ENCODE measurements at regions of chr6 and their contacts with region 1.

Region 1: DNA sequence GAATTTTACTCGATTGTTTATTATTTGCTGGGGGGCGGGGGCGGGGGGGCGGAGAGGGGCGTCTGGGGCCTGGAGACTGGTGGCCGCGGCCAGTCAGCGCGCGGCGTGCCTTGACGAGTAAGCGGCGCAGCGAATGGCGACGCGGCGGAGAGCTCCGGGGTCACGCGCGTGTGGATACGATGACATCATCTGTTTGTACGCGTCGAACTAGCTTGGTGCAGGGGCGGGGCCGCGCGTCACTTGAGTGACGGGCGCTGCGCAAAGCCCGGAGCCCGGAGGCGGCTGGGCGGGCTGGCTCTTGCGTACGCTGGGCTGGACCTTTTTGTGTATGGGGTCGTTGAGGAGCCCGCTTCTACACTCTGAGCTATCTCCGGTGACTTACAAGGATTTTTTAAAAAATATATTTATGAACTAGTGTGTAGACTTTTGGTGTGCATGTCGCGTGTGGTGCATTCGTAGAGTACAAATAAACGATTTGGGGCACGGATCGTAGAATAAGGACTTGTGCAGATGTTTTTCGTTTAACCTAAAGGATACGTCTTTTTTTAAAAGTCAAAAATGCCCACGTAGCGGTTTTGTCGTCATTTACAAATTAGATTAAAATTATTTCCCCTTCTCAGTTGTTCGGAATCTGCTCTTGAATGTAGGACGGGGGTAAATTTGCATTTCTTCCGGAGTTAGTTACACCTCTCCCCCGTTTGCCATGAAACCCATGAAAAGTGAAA is 2.2 kb upstream of the FOXO3 start:
- DNase-seq: peak; percentile 98
- H3K4me3 ChIP-seq: peak overlapping the region; percentile 82 to 93 (median 85)
- H3K27ac ChIP-seq: peak overlapping the region; percentile 83
- H3K4me1 ChIP-seq: peaks cover 30% of the 10 kb centered on the region
- H3K27me3 ChIP-seq: no peaks in the 10 kb centered on the region
- CTCF ChIP-seq: no peak

Region 2: DNA sequence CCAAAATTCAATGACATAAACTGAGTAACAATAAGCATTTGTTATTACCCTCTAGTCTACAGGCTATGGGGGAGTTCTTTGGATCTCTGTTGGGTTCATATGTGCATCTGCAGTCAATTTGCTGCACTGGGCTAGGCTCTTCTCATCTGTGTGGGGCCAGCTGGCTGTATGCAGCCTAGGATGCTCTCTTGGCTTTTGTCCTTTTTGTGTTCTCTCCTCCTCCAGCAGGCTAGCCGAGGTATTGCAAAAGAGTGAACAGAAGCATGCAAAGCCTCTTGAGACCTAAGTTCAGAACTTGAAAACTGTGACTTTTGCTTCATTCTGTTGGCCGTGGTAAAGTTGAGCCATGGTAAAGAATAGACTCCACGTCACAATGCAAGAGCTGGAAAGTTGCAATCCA is 60.7 kb before region 1 on chr6:
- CTCF ChIA-PET with region 1: no interaction called
- dilution Hi-C with region 1: no loop called
- in situ Hi-C with region 1: no loop called
- intact Hi-C with region 1: no loop called
- DNase-seq: peak; percentile 29
- H3K4me3 ChIP-seq: no peak overlapping the region
- H3K27ac ChIP-seq: no peak overlapping the region
- H3K4me1 ChIP-seq: peaks cover 8% of the 10 kb centered on the region
- H3K27me3 ChIP-seq: no peaks in the 10 kb centered on the region
- CTCF ChIP-seq: peak; percentile 41 to 70

Region 3: DNA sequence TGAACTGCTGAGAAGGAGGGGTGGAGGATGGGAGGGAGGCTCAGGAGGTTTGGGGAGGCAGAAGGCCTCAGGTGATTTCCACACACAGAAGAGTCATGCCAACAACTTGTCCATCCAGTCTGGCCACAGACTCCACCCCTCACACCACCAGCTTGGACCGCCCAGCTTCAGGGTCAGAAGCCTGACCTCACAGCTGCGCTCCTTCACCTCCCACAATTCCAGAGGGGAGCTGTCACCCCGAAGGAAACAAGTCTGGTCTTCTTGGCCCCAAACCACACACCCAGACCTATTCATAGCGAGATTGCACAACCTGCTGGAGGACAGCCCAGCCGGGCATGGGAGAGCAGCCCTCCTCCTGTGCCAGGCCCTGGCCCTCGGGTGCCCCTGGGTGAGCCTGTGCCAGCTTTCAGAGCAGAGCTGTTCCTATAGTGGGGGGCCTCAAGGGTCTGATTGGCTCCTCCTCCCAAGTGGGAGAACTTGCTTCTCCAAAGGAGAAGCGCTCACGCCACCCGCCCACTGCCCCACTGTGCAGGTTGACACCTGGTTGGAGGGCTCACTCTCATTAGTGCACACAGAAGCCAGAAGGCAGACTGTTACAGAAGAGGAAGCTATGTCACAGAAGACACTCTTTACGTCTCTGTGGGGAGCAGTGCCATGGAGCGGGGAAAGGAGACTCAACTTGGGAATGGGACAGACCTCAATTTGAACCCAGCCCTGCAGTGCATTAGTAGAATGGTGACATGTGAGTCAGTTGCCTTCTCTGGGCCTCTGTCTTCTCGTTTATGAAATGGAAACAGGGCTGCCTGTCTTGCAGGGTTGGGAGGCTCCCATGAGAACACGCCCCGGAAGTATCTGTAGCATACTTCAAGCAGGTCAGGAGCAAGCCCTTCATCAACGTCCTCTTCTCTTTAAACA is 131.0 kb after region 1 on chr6:
- CTCF ChIA-PET with region 1: interaction called, 3 read pairs
- dilution Hi-C with region 1: no loop called
- in situ Hi-C with region 1: no loop called
- intact Hi-C with region 1: loop called (anchors 1 kb)
- DNase-seq: peak; percentile 100
- H3K4me3 ChIP-seq: no peak overlapping the region
- H3K27ac ChIP-seq: peak overlapping the region; percentile 79
- H3K4me1 ChIP-seq: peaks cover 57% of the 10 kb centered on the region
- H3K27me3 ChIP-seq: no peaks in the 10 kb centered on the region
- CTCF ChIP-seq: peak in 1 of 2 donors; percentile 1

Region 4: DNA sequence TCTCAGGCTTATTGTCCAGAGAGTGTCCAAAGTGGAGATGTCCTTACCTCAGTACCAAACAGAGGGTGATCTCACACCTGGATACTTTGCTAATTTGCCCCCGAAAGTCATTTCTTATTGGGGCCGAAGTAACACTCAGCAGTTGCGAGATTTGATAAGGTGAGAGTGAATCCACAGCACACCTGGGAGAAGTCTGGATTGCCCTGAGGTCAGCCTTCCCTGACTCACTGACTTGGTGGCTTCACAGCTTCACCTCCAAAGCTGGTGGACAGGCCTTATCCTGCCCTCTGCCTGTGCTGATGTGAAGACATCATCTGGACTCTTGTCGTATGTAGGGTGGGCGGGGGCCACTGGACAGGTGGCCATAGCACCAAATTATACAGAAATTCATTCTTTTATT is 187.8 kb after region 1 on chr6:
- CTCF ChIA-PET with region 1: no interaction called
- dilution Hi-C with region 1: no loop called
- in situ Hi-C with region 1: no loop called
- intact Hi-C with region 1: loop called (anchors 1 kb)
- DNase-seq: peak; percentile 88
- H3K4me3 ChIP-seq: no peak overlapping the region
- H3K27ac ChIP-seq: no peak overlapping the region
- H3K4me1 ChIP-seq: peaks cover 21% of the 10 kb centered on the region
- H3K27me3 ChIP-seq: no peaks in the 10 kb centered on the region
- CTCF ChIP-seq: peak; percentile 6 to 47

Region 5: GRCh38 chr6:108896111-108896661 is 337.7 kb after region 1 on chr6:
- CTCF ChIA-PET with region 1: no interaction called
- dilution Hi-C with region 1: no loop called
- in situ Hi-C with region 1: no loop called
- intact Hi-C with region 1: loop called (anchors 5 kb)
- DNase-seq: peak; percentile 77
- H3K4me3 ChIP-seq: no peak overlapping the region
- H3K27ac ChIP-seq: peak overlapping the region; percentile 69
- H3K4me1 ChIP-seq: peaks cover 22% of the 10 kb centered on the region
- H3K27me3 ChIP-seq: no peaks in the 10 kb centered on the region
- CTCF ChIP-seq: no peak